ENCODE measurements at regions of chr11 and their contacts with region 1.

Region 1: DNA sequence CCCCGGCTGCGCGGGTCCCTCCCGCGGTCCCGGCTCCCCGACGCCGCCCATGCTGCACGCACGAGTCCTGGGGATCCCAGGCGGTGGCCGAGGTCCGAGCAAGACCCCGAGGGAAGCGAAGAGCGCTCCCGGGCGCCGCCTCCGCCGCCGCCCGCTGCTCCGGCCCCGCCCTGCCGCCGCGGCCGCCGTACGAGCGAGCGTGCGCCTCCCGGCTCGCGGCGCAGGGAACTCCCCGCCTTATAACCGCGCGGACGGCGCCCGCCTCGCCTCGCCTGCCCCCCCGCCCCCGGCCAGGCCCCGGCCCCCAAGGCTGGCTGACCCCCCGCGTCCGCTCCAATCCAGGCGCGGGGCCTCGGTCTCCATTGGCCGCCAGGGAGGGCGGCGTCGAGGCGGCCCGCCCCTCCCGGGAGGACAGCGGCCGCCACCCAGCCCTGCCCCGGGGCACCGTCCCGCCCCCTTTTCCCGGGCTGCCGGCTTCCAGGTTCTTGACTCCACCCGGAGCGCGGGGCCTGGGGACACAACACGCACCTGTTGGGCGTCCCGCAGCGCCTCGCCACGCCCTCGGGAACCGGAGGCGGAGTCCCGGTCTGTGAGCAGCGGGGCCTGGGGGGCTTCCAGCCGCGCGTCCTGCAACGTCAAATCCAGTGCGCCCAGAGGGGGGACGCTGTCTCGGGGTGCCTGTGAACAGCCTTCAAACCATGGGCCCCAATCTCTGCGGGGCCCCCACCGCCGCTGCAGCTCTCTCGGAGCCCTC is at the start of gene FADS3:
- DNase-seq: peak; percentile 88 to 92
- ATAC-seq: peak; percentile 85 to 91 (median 87)
- H3K4me3 ChIP-seq: peak within 1 kb of the TSS; percentile 63 to 98 (median 93)
- H3K27ac ChIP-seq: peak within 1 kb of the TSS; percentile 84 to 98 (median 96)
- H3K4me1 ChIP-seq: peaks cover 14 to 58% (median 41%) of the 10 kb centered on the region in 9 donors
- H3K27me3 ChIP-seq: no peaks in the 10 kb centered on the region
- CTCF ChIP-seq: peak in 3 of 9 donors; percentile 3 to 29 (median 22)
- total RNA-seq, gene FADS3: 54.9 to 119 (median 71.1) TPM

Region 2: GRCh38 chr11:61871158-61871597 is 20.3 kb before region 1 on chr11:
- intact Hi-C with region 1: loop called in 2 of 10 experiments (anchors 1 to 2 kb)
- DNase-seq: peak; percentile 79 to 87
- ATAC-seq: peak; percentile 82 to 91 (median 88)
- H3K4me3 ChIP-seq: peak overlapping the region in 4 of 10 donors; percentile 10 to 40 (median 25)
- H3K27ac ChIP-seq: peak overlapping the region in 9 of 10 donors; percentile 5 to 72 (median 53)
- H3K4me1 ChIP-seq: peaks cover 6 to 51% (median 31%) of the 10 kb centered on the region in 9 donors
- H3K27me3 ChIP-seq: no peaks in the 10 kb centered on the region
- CTCF ChIP-seq: peak; percentile 92 to 98 (median 94)